ENCODE measurements at regions of chr4 and their contacts with region 1.

Region 1: GRCh38 chr4:173505924-173506518 is 24.0 kb downstream of the HAND2 start:
- DNase-seq: peak; percentile 75 to 85
- ATAC-seq: no peak
- H3K4me3 ChIP-seq: no peak overlapping the region
- H3K27ac ChIP-seq: no peak overlapping the region
- H3K4me1 ChIP-seq: no peaks in the 10 kb centered on the region
- H3K27me3 ChIP-seq: no peaks in the 10 kb centered on the region

Region 2: GRCh38 chr4:172736046-172736445 is 770.0 kb before region 1 on chr4:
- intact Hi-C with region 1: no loop called
- DNase-seq: no peak
- ATAC-seq: no peak
- H3K4me3 ChIP-seq: no peak overlapping the region
- H3K27ac ChIP-seq: no peak overlapping the region
- H3K4me1 ChIP-seq: no peaks in the 10 kb centered on the region
- H3K27me3 ChIP-seq: no peaks in the 10 kb centered on the region

Region 3: DNA sequence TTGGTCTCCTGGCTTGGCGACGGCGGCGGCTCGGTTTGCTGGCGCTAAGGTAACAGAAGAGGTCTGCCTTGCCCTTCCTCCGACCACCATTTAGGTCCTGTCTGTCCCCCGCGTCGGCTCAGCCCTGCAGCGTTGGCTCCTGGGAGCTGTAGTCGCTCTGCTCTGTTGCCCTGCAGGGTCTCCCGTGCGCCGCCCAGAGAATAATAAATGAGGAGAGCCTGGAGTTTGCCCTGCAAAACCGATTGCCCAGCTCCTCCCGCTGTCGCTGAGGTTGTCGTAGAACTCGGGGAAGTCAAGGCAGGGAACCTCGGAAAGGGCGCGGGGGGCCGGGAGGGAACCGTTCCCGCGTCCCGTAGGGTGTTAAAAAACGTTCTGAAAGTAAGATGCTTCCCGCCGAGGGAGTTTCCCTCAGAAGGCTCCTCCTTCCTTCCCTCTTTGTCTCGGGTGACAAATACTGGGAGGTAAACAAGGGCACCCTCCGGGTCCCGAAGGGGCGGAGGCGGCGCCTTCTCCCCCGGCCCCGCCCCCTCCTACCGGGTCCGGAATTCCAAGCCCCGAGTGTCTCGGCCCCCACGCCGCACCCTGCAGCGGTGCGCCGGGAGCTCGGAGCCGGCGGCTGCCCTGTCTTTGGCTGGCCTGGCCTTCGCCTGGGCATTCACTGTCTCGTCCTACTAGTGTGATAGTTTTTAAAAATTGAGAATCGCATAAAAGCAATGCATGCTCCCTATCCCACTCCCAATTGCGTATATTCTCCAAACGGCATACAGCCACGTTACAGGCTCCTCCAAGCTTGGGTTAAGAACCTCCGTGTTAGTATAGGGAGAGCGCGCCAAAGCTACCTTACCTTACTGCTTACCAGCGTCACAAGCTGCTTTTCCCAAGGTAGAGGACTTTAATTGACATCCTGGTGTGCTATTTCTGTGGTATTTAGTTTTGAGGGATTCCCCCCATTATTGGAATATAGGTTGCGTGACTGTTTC is 171.0 kb before region 1 on chr4:
- intact Hi-C with region 1: no loop called
- DNase-seq: peak; percentile 75 to 83
- ATAC-seq: peak; percentile 64
- H3K4me3 ChIP-seq: peak overlapping the region; percentile 55 to 70
- H3K27ac ChIP-seq: peak overlapping the region in 1 of 2 donors; percentile 32
- H3K4me1 ChIP-seq: no peaks in the 10 kb centered on the region
- H3K27me3 ChIP-seq: no peaks in the 10 kb centered on the region

Region 4: DNA sequence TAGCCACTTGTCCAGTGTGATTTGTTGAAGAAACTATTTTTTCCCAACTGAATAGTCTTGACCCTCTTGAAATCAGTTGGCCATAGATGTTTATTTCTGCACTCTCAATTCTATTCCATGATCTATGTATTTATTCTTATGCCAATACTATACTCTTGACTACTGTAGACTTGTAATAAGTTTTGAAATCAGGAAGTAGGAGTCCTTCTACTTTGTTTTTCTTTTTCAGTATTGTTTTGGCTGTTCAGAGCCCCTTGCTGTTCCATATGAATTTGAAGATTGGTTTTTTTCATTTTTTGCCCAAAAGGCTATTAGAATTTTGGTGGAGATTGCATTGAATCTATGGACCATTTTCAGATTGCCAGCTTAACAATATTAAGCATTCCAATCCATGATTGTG is 125.0 kb before region 1 on chr4:
- intact Hi-C with region 1: no loop called
- DNase-seq: no peak
- ATAC-seq: no peak
- H3K4me3 ChIP-seq: no peak overlapping the region
- H3K27ac ChIP-seq: no peak overlapping the region
- H3K4me1 ChIP-seq: no peaks in the 10 kb centered on the region
- H3K27me3 ChIP-seq: no peaks in the 10 kb centered on the region

Region 5: DNA sequence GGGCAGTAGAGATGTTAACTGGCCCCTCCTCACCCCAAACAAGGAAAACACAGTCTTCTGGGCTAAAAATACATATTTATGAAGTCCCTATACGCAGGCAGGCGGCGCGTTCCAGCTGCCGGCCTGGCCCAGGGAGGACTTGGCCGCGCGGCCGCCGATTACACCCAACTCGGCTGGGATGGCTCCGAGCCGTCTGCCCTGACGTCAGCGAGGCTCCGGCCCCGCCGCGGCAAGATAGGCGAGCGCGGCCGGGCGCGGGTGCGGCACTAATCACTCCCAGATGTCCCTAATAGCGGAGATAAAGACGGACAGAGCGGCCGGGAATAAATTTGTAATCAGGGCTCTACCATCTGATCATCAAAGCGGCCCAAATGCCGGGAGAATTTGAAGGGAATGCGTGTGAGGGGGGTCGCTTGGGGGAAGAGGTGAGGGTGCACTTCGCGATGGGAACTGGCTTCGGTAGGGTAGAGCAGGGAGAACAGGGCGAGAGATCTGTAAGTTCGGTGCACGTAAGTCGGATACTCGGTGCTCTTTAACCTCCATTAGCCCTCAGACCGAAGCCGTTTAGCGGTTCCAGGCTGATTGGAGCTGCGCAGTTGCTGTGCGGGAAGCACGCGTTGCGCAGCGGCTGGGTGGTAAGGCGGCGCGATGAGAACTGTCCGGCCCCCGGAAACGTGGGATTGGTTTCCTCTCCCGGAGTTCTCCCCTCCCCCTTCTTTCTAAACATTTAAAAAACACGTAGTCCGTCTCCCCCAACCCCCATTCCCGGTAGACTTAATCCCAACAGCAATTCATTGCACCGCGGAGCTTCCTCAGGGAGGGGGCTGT is 16.3 kb after region 1 on chr4:
- intact Hi-C with region 1: no loop called
- DNase-seq: peak; percentile 91 to 93
- ATAC-seq: peak; percentile 91
- H3K4me3 ChIP-seq: peak overlapping the region; percentile 27 to 47
- H3K27ac ChIP-seq: peak overlapping the region; percentile 78 to 98
- H3K4me1 ChIP-seq: no peaks in the 10 kb centered on the region
- H3K27me3 ChIP-seq: no peaks in the 10 kb centered on the region

Region 6: DNA sequence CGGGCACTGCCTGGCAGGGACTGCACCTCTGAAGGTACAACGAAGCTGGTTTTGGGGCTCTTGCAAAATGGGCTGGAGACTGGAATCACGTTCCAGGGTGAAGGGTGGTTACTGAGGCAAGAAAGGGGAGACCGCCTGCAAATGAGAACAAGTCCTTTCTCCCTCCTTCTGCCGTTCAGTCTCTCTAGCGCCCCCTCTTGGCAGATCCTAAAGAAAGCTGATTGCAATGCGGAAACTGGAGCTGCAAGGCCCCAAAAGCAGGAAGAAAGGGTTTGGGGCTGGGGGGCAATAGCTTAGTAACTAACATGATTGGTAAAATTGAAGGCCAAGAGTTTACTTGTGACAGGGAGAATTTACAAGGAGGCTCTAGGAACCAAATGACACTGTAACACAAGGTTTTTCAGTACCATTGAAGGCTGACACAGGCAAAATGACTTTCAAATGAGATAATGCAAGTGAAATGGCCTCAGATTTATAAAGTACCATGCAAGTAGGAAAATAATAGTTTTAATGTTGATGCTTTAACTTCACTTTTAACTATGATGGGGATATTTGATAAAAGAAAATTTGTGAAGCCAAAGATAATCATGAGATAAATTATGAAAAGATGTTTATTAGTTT is 246.7 kb after region 1 on chr4:
- intact Hi-C with region 1: loop called (anchors 2 to 10 kb)
- DNase-seq: peak in 1 of 2 donors; percentile 38
- ATAC-seq: no peak
- H3K4me3 ChIP-seq: no peak overlapping the region
- H3K27ac ChIP-seq: no peak overlapping the region
- H3K4me1 ChIP-seq: no peaks in the 10 kb centered on the region
- H3K27me3 ChIP-seq: no peaks in the 10 kb centered on the region

Region 7: GRCh38 chr4:173827707-173828106 is 321.7 kb after region 1 on chr4:
- intact Hi-C with region 1: loop called in 1 of 2 experiments (anchors 5 kb)
- DNase-seq: no peak
- ATAC-seq: no peak
- H3K4me3 ChIP-seq: no peak overlapping the region
- H3K27ac ChIP-seq: no peak overlapping the region
- H3K4me1 ChIP-seq: no peaks in the 10 kb centered on the region
- H3K27me3 ChIP-seq: no peaks in the 10 kb centered on the region

Region 8: DNA sequence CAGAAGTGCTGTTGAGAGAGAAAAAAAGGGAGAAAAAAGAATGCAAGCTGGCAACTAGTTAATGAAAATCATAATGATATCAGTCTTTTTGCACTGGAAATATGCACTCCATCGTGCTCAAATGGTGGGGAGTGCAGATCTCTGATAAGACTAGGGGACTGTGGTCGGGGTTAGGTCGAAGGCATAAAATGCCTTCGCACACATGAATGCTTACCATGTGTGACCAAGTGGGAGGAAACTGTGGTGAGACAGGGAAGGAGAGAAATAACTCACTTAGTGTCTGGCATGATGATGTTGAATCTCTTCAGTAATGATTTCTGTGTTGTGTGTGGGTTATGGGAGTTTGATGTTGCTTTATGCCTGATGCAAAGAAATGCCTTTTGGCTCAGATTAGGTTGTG is 418.5 kb after region 1 on chr4:
- intact Hi-C with region 1: loop called in 1 of 2 experiments (anchors 10 kb)
- DNase-seq: no peak
- ATAC-seq: no peak
- H3K4me3 ChIP-seq: no peak overlapping the region
- H3K27ac ChIP-seq: peak overlapping the region in 1 of 2 donors; percentile 64
- H3K4me1 ChIP-seq: peaks cover 1 to 8% of the 10 kb centered on the region in 2 donors
- H3K27me3 ChIP-seq: no peaks in the 10 kb centered on the region

Region 9: DNA sequence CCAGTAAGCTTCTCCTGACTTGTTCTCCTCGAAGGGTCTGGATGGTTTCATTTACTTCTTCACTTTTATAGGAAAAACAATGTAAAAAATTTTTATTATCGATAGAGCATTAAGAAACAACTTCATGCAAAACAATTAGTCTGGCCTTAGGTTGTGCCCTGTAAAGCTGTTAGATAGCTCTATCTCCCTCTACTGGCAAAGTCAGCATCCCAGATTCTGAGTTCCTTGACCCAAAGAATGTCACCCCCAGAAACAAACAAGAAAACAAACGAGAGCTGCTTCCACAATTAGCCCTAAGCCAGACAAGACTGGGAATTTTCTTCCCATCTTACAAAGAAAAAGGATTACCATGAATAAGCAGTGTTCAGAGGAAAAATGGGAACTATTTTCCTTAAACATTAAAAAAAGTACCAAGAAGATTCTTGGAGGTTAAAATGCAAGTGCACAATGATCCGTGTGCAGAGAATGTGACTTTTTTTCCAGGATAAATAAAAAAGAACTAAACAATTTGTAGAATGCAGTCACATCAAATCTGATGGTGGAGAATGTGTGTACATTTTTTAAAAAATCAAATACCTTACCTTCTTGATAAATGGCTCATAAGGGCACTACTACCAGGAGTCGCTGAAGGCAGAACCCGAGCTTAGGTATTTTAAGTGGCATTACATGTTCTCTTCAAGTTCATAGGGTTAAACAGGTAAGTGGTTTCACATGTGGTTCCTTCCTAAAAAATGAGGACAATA is 484.3 kb after region 1 on chr4:
- intact Hi-C with region 1: loop called (anchors 2 to 5 kb)
- DNase-seq: no peak
- ATAC-seq: no peak
- H3K4me3 ChIP-seq: peak overlapping the region in 1 of 2 donors; percentile 41
- H3K27ac ChIP-seq: no peak overlapping the region
- H3K4me1 ChIP-seq: no peaks in the 10 kb centered on the region
- H3K27me3 ChIP-seq: no peaks in the 10 kb centered on the region

Region 10: GRCh38 chr4:174120446-174121295 is 614.6 kb after region 1 on chr4:
- intact Hi-C with region 1: loop called (anchors 2 to 10 kb)
- DNase-seq: peak in 1 of 2 donors; percentile 65
- ATAC-seq: peak; percentile 78
- H3K4me3 ChIP-seq: peak overlapping the region; percentile 64 to 79
- H3K27ac ChIP-seq: no peak overlapping the region
- H3K4me1 ChIP-seq: no peaks in the 10 kb centered on the region
- H3K27me3 ChIP-seq: no peaks in the 10 kb centered on the region

Region 11: DNA sequence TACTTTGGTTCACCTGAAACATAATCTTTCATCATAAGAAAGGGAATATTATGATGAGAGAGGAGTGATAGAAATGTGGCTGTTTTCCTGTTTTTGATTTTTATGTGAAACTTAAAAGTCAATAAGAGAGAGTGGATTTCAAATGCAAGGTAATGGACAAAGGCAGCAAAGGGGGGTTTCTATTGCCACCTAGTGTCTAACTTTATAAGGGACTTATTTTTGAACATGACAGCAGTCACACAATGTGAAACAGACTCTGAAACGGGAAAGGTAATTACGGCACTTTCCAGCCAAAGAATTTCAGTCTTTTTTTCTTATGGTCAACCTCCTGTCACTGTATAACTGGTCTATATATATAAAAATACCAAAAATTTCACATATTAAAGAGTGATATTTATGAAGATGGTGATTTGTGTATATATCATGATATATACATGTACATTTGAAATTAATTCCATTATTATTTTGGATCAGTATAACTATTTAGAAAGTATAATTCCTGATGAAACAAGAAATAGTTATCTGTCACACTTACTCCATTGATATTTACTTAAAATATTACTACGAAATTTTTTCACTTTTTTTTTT is 650.3 kb after region 1 on chr4:
- intact Hi-C with region 1: loop called in 1 of 2 experiments (anchors 10 kb)
- DNase-seq: no peak
- ATAC-seq: no peak
- H3K4me3 ChIP-seq: no peak overlapping the region
- H3K27ac ChIP-seq: no peak overlapping the region
- H3K4me1 ChIP-seq: no peaks in the 10 kb centered on the region
- H3K27me3 ChIP-seq: no peaks in the 10 kb centered on the region